T-cell (primary cell): ENCODE measurements at regions of chr9 and their contacts with region 1.

Region 1: DNA sequence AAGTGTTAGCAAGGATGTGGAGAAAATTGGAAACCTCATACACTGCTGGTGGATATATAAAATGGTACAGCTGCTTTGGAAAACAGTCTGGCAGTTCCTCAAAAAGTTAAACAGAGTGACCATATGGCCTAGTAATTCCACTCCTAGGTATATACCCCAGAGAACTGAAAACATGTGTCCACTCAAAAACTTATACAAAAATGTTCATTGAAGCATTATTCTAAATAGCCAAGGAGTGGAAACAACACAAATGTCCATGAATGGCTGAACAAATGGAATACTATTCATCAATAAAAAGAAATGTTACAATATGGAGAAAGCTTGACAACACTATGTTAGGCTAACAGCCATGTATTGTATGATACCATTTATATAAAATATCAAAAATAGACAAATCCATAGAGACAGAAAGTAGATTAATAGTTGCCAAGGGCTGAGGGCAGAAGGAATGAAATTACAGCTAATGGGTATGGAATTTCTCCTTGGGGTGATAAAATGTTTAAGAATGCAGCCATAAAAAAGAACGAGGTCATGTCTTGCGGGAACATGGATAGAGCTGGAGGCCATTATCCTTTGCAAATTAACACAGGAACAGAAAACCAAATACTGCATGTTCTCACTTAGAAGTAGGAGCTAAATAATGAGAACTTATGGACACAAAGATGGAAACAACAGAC is 33.6 kb upstream of the FBP1 start:
- DNase-seq: no peak
- ATAC-seq: no peak
- H3K4me3 ChIP-seq: no peak overlapping the region
- H3K4me3 Mint-ChIP-seq: no peak overlapping the region
- H3K27ac ChIP-seq: no peak overlapping the region
- H3K27ac Mint-ChIP-seq: no peak overlapping the region
- H3K4me1 ChIP-seq: no peaks in the 10 kb centered on the region
- H3K4me1 Mint-ChIP-seq: peaks cover 0 to 10% (median 0%) of the 10 kb centered on the region in 3 donors
- H3K27me3 ChIP-seq: peaks cover 0 to 5% of the 10 kb centered on the region in 2 experiments
- H3K27me3 Mint-ChIP-seq: peaks cover 0 to 6% of the 10 kb centered on the region in 2 donors

Region 2: DNA sequence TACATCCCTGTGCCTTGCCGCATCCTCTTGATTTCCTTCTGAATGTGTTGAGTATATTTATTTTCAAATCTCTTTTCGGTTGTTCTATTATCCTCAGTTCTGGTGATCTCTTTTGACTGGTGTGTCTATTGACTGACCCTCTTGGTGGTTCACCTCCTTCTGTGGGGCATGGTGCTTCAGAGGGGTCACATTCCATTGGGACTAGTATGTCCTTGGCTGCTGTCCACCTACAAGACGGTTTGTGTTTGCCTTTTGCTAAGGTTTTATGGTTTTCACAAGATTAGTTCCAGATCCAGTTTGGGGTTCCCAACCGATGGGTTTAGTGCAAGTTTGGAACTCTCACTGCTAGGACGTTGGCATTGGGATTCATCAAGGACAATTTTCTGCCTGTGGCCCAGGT is 1030.0 kb before region 1 on chr9:
- CTCF ChIA-PET with region 1: no interaction called
- POLR2A ChIA-PET with region 1: no interaction called
- DNase-seq: no peak
- ATAC-seq: no peak
- H3K4me3 ChIP-seq: no peak overlapping the region
- H3K4me3 Mint-ChIP-seq: no peak overlapping the region
- H3K27ac ChIP-seq: no peak overlapping the region
- H3K27ac Mint-ChIP-seq: no peak overlapping the region
- H3K4me1 ChIP-seq: no peaks in the 10 kb centered on the region
- H3K4me1 Mint-ChIP-seq: no peaks in the 10 kb centered on the region
- H3K27me3 ChIP-seq: peaks cover 0 to 2% of the 10 kb centered on the region in 2 experiments
- H3K27me3 Mint-ChIP-seq: no peaks in the 10 kb centered on the region

Region 3: DNA sequence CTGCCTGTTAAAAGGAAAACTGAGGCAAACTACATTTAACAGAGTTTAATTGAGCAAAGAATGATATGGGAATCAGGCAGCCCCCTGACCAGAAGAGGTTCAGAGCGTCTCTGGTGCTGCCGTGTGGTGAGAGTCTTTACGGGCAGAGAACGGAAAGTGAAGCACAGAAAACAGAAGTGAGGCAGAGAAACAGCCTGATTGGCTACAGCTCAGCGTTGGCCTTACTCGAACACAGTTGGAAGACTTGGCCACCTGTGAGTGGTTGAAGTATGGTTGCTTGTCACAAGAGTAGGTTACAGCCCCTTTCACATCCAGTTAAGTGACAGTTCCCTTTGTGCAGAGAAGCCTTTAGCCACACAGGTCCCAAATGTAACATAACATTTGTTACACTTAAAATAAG is 16.7 kb before region 1 on chr9:
- CTCF ChIA-PET with region 1: interaction called, 7 to 11 read pairs
- POLR2A ChIA-PET with region 1: interaction called in 1 of 2 experiments, 8 read pairs
- DNase-seq: peak in 31 of 35 experiments; percentile 15 to 71 (median 34)
- ATAC-seq: peak; percentile 91 to 99 (median 96)
- H3K4me3 ChIP-seq: peak overlapping the region; percentile 18 to 34
- H3K4me3 Mint-ChIP-seq: peak overlapping the region; percentile 70 to 79 (median 77)
- H3K27ac ChIP-seq: peak overlapping the region; percentile 43
- H3K27ac Mint-ChIP-seq: peak overlapping the region; percentile 70 to 77
- H3K4me1 ChIP-seq: peaks cover 11 to 17% of the 10 kb centered on the region in 2 experiments
- H3K4me1 Mint-ChIP-seq: peaks cover 11 to 20% (median 19%) of the 10 kb centered on the region in 3 donors
- H3K27me3 ChIP-seq: peaks cover 0 to 2% of the 10 kb centered on the region in 2 experiments
- H3K27me3 Mint-ChIP-seq: peaks cover 6 to 8% of the 10 kb centered on the region in 2 donors

Region 4: GRCh38 chr9:95103385-95103784 is 430.4 kb after region 1 on chr9:
- CTCF ChIA-PET with region 1: no interaction called
- POLR2A ChIA-PET with region 1: no interaction called
- DNase-seq: no peak
- ATAC-seq: no peak
- H3K4me3 ChIP-seq: no peak overlapping the region
- H3K4me3 Mint-ChIP-seq: no peak overlapping the region
- H3K27ac ChIP-seq: no peak overlapping the region
- H3K27ac Mint-ChIP-seq: no peak overlapping the region
- H3K4me1 ChIP-seq: no peaks in the 10 kb centered on the region
- H3K4me1 Mint-ChIP-seq: no peaks in the 10 kb centered on the region
- H3K27me3 ChIP-seq: no peaks in the 10 kb centered on the region
- H3K27me3 Mint-ChIP-seq: no peaks in the 10 kb centered on the region

Region 5: DNA sequence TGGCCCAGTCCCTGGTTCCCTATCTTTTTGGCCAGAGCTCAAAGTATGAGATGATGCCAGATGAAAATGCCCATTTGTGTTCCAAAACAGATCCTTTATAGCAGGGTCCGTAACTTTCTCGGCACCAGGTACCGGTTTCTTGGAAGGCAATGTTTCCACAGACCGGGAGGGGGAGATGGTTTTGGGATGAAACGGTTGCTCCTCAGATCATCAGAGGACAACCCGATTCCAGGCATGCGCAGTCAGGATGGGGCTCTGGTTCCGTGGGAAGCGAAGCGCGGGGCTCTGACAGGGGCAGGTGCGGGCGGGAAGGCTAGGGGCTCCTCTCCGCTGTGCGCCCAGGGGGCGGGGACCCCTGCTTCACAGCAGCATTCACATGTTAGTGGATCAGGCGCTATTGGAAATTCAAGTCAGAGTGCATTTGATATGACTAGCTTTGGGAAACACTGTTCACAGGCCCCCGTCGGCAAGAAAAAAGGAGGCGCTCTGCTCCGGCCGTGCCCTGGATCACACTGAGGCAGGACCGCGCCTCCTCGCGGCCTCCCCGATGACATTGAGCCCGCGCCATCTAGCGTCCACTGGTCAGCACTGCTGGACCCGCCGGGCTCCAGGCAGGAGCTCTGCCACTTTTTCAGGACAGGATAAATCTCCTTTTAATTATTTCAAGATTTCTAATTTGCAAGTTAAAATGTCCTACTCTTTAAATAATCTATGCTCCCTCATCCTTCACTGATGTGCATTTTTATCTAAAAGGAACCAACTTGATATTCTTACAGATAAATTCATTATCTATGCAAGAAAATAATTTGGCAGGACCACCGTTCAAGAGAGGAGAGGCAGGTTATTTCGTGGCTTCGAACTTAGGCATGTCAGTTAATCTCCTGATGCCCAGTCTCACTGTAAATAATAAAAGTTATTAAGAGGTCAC is 454.6 kb after region 1 on chr9:
- CTCF ChIA-PET with region 1: interaction called, 5 to 14 read pairs
- POLR2A ChIA-PET with region 1: no interaction called
- DNase-seq: peak; percentile 12 to 74 (median 55)
- ATAC-seq: peak; percentile 81 to 85 (median 82)
- H3K4me3 ChIP-seq: no peak overlapping the region
- H3K4me3 Mint-ChIP-seq: no peak overlapping the region
- H3K27ac ChIP-seq: no peak overlapping the region
- H3K27ac Mint-ChIP-seq: no peak overlapping the region
- H3K4me1 ChIP-seq: peaks cover 0 to 5% of the 10 kb centered on the region in 2 experiments
- H3K4me1 Mint-ChIP-seq: peaks cover 0 to 7% (median 4%) of the 10 kb centered on the region in 3 donors
- H3K27me3 ChIP-seq: no peaks in the 10 kb centered on the region
- H3K27me3 Mint-ChIP-seq: no peaks in the 10 kb centered on the region

Region 6: DNA sequence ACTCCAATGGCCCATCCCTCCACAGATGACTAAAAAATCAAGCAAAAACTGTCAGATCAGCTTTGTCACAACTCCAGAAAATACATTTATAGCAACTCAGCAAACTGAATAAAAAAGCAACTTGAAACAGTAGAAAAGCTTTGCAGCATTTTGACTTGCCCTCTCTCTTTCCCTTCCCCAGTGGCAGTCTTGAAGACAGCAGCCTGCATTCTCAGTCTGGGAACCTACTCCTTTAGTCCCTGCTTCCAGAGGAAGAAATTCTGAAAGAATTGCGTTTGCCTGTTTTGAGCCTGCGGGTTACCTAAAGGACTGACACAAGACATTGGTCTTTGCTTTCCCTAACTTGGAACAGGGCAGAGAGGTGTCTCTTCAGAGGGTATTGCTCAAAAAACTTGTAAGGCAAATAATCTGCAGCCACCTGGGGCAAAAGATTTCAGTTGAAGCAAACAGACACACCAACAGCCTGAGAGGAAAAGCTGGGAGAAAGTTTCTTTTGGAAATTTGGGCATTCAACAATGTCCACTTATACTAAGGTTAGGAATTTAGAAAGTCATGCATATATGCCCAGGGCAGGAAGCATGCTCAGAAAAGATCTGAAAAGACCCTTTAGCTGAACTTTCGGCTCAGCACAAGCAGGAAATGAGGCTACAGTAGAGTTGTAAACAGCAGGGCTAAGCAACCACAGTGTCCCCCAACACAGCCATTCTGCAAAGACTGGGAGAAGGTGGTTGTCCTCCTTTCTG is 1725.8 kb after region 1 on chr9:
- CTCF ChIA-PET with region 1: no interaction called
- POLR2A ChIA-PET with region 1: interaction called in 1 of 2 experiments, 10 read pairs
- DNase-seq: peak in 9 of 35 experiments; percentile 8 to 49 (median 20)
- ATAC-seq: peak; percentile 90 to 97 (median 94)
- H3K4me3 ChIP-seq: no peak overlapping the region
- H3K4me3 Mint-ChIP-seq: peak overlapping the region; percentile 21 to 51 (median 29)
- H3K27ac ChIP-seq: peak overlapping the region; percentile 83
- H3K27ac Mint-ChIP-seq: peak overlapping the region; percentile 94 to 97
- H3K4me1 ChIP-seq: peaks cover 12 to 18% of the 10 kb centered on the region in 2 experiments
- H3K4me1 Mint-ChIP-seq: peaks cover 25 to 30% (median 27%) of the 10 kb centered on the region in 3 donors
- H3K27me3 ChIP-seq: no peaks in the 10 kb centered on the region
- H3K27me3 Mint-ChIP-seq: no peaks in the 10 kb centered on the region